ENCODE measurements at regions of chr6 and their contacts with region 1.

Region 1: DNA sequence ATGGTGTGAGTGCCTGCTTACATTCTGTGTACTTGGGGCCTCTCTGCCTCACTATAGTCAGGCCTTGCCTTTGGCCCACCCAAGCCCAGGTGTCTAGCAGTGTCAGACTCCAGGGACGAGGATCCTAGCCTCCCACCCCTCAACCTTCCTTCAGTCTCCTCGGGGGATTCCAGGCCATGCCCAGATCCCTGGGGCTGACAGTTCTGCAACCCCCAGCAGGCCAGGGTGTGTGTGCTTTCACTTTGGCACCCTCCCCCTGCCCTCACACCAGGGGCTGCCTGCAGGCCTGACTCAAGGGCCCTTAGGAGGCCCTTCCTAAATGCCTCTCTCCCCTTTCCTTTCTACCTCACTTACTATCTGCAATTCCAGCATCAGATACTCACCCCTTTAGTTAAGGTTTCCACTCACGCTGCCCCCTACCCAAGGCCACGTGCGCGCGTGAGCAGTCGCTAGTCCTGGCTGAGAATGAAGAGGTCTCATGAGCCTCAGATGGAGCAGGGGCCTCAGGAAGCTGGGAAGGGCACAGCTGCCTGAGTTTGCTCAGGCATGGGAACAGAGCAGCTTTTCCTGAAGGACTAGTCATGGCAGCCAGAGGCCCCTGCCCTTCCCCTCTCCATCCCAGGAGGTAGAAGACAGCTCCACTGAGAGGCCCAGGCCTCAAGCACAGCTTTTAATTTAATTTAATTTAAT is 859 bp upstream of the CLPS start:
- DNase-seq: no peak
- H3K4me3 ChIP-seq: no peak overlapping the region
- H3K27ac ChIP-seq: no peak overlapping the region
- H3K4me1 ChIP-seq: peaks cover 0 to 7% (median 5%) of the 10 kb centered on the region in 4 experiments; a peak in 4 of 7 replicates
- H3K27me3 ChIP-seq: no peaks in the 10 kb centered on the region
- CTCF ChIP-seq: no peak
- EP300 ChIP-seq: no peak
- POLR2A ChIP-seq: no peak
- RAD21 ChIP-seq: no peak

Region 2: DNA sequence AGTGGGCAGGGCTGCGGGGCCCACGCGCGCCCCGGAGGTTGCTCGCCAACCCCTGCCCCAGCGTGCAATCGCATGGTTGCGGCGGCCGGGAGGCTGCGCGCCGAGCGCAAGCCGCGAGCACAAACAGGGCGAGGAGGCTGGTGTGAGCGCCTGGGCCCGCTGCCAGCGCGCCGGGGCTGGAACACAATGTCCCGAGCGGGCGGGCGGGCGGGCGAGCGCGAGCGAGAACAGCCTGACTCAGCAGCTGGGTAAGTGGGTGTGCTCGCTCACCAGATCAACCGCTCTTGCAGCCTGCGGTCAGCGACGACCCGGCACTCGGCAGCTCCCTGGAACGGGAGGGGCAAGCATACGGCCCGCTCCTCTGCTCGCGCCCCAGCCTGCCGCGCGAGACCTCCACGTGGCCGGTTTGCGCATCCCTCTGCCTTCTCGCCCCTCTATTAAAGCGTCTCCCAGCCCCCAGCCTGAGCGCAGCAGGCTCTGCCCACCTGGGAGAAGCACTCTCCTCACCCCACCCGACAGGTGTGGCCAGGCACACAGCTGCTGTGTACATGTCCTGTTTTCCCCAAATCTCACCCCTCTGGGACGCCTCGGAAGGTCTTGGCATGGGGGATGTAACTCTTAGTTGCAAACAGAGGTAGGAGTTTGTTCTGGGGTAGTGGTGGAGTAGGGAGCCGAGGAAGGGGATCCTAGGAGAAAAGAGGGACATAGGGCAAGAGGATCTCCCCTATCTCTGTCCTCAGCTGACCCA is 69.9 kb before region 1 on chr6:
- CTCF ChIA-PET with region 1: no interaction called
- POLR2A ChIA-PET with region 1: no interaction called
- DNase-seq: peak in 1 of 2 experiments; percentile 70
- H3K4me3 ChIP-seq: peak overlapping the region; percentile 75 to 92 (median 88)
- H3K27ac ChIP-seq: peak overlapping the region; percentile 59
- H3K4me1 ChIP-seq: peaks cover 10 to 40% (median 32%) of the 10 kb centered on the region in 4 experiments
- H3K27me3 ChIP-seq: peaks cover 0 to 7% (median 1%) of the 10 kb centered on the region in 4 experiments; a peak in 3 of 7 replicates
- CTCF ChIP-seq: no peak
- EP300 ChIP-seq: peak in 1 of 2 experiments; percentile 55; a peak in 1 of 3 replicates
- POLR2A ChIP-seq: peak in 1 of 2 experiments; percentile 41; a peak in 1 of 3 replicates
- RAD21 ChIP-seq: no peak

Region 3: GRCh38 chr6:35786810-35787209 is 11.2 kb before region 1 on chr6:
- CTCF ChIA-PET with region 1: interaction called, 27 read pairs
- POLR2A ChIA-PET with region 1: interaction called, 9 read pairs
- DNase-seq: no peak
- H3K4me3 ChIP-seq: no peak overlapping the region
- H3K27ac ChIP-seq: no peak overlapping the region
- H3K4me1 ChIP-seq: peaks cover 0 to 5% (median 0%) of the 10 kb centered on the region in 4 experiments; a peak in 3 of 7 replicates
- H3K27me3 ChIP-seq: no peaks in the 10 kb centered on the region
- CTCF ChIP-seq: no peak
- EP300 ChIP-seq: no peak
- POLR2A ChIP-seq: no peak
- RAD21 ChIP-seq: no peak